ENCODE measurements at regions of chr2 and their contacts with region 1.

Region 1: GRCh38 chr2:3644246-3644525 is 13.8 kb upstream of the ALLC start:
- DNase-seq: no peak
- H3K4me3 ChIP-seq: no peak overlapping the region
- H3K27ac ChIP-seq: no peak overlapping the region
- H3K4me1 ChIP-seq: no peaks in the 10 kb centered on the region
- H3K27me3 ChIP-seq: no peaks in the 10 kb centered on the region
- CTCF ChIP-seq: no peak
- POLR2A ChIP-seq: no peak

Region 2: DNA sequence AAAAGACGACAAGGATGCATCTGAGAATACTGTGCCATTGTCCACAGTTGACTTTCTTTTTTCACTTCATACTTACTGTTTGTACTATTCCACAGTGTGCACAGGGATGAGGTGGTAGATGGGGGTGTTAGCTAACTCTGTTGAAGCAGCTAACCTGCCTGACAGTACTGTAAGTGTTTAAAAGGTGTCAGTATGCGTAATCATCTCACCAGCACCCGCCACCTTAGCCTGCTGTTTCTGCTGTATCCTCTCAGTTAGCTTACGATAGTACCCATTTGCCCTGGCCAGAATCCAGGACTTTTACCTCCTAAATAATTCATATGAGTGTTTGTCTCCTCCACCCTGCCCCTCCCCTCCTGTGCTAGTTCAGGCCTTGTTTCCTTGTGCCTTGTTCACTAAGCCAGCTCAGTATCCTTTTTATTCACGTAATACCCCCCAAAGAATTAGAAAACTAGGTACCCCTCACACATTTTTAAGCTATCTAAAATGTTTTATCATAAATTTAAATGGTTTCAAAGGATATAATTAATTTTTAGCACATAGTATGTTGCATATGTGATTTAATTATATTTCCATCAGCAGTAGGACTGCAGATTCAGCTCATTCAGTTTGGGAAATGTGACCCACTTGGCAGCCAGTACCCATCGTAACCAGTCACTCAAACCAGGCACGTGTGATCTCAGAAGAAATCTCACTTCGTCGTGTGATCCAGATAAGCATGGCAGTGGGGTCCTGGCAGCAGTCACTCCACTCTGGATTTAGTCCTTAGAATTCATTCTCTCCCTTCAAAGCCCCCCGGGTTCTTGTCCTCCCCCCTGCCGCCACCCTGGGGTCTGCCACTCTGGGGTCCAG is 230.3 kb before region 1 on chr2:
- intact Hi-C with region 1: loop called in 1 of 2 experiments (anchors 10 kb)
- DNase-seq: no peak
- H3K4me3 ChIP-seq: no peak overlapping the region
- H3K27ac ChIP-seq: no peak overlapping the region
- H3K4me1 ChIP-seq: peaks cover 7 to 13% of the 10 kb centered on the region in 2 donors
- H3K27me3 ChIP-seq: no peaks in the 10 kb centered on the region
- CTCF ChIP-seq: no peak
- POLR2A ChIP-seq: no peak

Region 3: DNA sequence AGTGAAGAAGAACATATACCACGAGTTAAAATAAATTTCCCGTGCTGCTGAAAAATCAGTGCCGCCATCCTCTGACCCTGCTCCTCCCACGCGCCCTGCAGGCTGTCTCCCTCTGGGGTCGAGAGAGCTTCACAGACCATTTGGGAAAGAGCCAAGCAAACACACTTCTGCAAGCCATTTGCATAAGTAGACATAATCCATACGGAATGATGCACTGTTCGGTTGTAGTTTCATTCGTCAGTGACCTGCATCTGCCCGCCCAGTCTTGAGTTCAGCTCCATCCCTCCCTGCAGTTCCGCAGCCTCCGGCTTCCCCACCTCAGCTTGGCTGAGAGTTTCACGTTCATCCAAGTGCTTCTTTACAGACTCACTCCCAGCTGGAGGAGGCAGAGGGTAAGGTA is 195.1 kb before region 1 on chr2:
- intact Hi-C with region 1: loop called in 1 of 2 experiments (anchors 10 kb)
- DNase-seq: peak in 1 of 7 donors; percentile 49
- H3K4me3 ChIP-seq: no peak overlapping the region
- H3K27ac ChIP-seq: peak overlapping the region in 2 of 5 donors; percentile 48 to 57
- H3K4me1 ChIP-seq: peaks cover 0 to 4% of the 10 kb centered on the region in 2 donors
- H3K27me3 ChIP-seq: no peaks in the 10 kb centered on the region
- CTCF ChIP-seq: no peak
- POLR2A ChIP-seq: no peak